ENCODE measurements at regions of chr10 and their contacts with region 1.

Region 1: DNA sequence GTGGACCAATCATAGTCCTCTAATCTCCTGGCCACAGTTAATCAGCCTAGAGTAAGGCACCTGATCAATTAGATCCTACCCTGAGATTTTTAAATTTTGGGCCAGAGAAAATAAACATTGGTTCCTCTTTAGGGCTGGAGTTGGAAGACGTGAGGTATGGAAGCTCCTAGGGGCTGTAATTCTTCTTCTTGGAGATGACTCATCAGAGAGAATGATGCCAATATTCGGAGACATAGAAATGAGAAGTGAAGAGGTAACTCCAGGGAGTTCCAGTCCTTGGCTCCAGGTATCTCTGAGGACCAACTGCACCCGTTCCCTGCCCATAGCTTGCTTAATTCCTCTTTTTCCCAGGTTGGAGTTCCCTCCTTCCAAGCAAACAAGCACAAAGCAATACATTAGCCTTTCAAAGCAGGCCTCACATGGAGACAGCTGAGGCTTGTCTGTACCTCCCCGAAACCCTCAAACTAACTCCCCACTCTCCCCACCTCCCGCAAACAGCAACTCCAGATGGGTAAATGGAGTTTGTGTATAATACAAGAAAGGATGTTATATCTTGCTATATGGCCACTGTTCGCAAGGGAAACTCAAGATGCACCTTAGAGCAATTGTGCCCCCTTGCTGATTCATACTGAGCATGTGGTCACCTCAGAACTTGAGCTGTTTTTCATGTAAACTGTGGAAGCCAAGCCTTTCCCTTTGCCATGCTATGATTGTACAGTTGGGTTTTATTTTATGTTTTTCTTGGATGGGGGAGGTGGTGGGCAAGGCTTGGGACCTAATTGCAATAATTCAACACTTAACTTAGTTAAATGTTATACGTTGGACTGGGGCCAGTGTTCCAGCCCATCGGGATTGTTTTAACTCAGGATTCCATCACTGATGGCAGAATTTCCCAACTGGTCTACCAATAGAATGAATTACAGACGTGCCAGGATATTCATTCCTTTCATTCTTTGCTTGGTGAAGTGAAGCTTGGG is 29.3 kb downstream of the PIK3AP1 start:
- DNase-seq: no peak
- ATAC-seq: peak; percentile 35
- H3K4me3 Mint-ChIP-seq: peak overlapping the region; percentile 62
- H3K27ac Mint-ChIP-seq: peak overlapping the region; percentile 82
- H3K4me1 Mint-ChIP-seq: peaks cover 94% of the 10 kb centered on the region
- H3K27me3 Mint-ChIP-seq: no peaks in the 10 kb centered on the region
- CTCF ChIP-seq: no peak

Region 2: DNA sequence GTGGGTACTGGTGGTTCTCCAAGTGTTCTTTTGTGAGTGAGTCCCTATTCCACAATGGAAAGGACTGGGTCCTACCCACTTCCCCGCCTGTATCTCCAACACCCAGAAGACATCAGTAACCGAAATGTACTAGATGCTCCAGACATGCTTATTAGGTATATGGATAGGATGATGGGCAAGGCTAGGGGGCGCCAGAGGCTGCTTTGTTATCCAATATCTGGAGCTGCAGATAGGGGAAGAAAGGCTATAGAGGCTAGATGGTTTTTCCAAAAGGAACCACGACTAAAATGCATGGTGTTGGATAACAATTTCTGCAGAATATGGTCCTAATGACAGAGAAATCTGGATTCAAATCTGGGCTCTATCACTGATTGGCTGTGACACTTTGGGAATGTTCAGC is 48.1 kb before region 1 on chr10:
- CTCF ChIA-PET with region 1: interaction called, 6 read pairs
- POLR2A ChIA-PET with region 1: interaction called, 8 read pairs
- intact Hi-C with region 1: loop called (anchors 1 kb)
- DNase-seq: peak; percentile 54
- ATAC-seq: no peak
- H3K4me3 Mint-ChIP-seq: no peak overlapping the region
- H3K27ac Mint-ChIP-seq: peak overlapping the region; percentile 56
- H3K4me1 Mint-ChIP-seq: peaks cover 58% of the 10 kb centered on the region
- H3K27me3 Mint-ChIP-seq: no peaks in the 10 kb centered on the region
- CTCF ChIP-seq: no peak

Region 3: GRCh38 chr10:96673318-96674099 is 17.5 kb before region 1 on chr10:
- CTCF ChIA-PET with region 1: interaction called, 4 read pairs
- POLR2A ChIA-PET with region 1: interaction called, 11 read pairs
- intact Hi-C with region 1: loop called (anchors 1 kb)
- DNase-seq: peak; percentile 39
- ATAC-seq: peak; percentile 83
- H3K4me3 Mint-ChIP-seq: peak overlapping the region; percentile 77
- H3K27ac Mint-ChIP-seq: peak overlapping the region; percentile 99
- H3K4me1 Mint-ChIP-seq: peaks cover 90% of the 10 kb centered on the region
- H3K27me3 Mint-ChIP-seq: no peaks in the 10 kb centered on the region
- CTCF ChIP-seq: no peak

Region 4: DNA sequence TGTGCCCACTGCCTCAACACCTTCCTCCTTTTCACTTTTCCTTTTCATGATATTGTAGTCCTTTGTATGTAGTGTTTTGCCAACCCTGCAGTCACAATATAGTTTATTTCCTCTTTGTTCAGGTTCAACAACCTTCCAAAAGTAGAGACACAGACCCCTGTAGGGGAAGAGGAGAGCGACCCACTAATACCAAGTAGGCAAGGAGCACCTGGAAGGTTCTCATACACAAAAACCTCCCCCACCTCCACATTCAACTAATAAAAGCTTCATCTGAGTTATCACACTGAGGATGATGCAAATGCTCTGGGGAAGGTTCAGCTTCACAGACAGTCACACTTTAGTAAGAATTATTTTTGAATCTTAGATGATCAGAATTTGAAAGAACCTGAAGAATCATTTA is 12.3 kb before region 1 on chr10:
- CTCF ChIA-PET with region 1: interaction called, 3 read pairs
- POLR2A ChIA-PET with region 1: interaction called, 11 read pairs
- intact Hi-C with region 1: loop called (anchors 1 kb)
- DNase-seq: no peak
- ATAC-seq: peak; percentile 42
- H3K4me3 Mint-ChIP-seq: peak overlapping the region; percentile 57
- H3K27ac Mint-ChIP-seq: peak overlapping the region; percentile 86
- H3K4me1 Mint-ChIP-seq: peaks cover 90% of the 10 kb centered on the region
- H3K27me3 Mint-ChIP-seq: no peaks in the 10 kb centered on the region
- CTCF ChIP-seq: no peak

Region 5: GRCh38 chr10:96708456-96708855 is 17.4 kb after region 1 on chr10:
- CTCF ChIA-PET with region 1: interaction called, 3 read pairs
- POLR2A ChIA-PET with region 1: interaction called, 11 read pairs
- intact Hi-C with region 1: no loop called
- DNase-seq: no peak
- ATAC-seq: peak; percentile 77
- H3K4me3 Mint-ChIP-seq: peak overlapping the region; percentile 69
- H3K27ac Mint-ChIP-seq: peak overlapping the region; percentile 96
- H3K4me1 Mint-ChIP-seq: peaks cover 83% of the 10 kb centered on the region
- H3K27me3 Mint-ChIP-seq: no peaks in the 10 kb centered on the region
- CTCF ChIP-seq: no peak

Region 6: GRCh38 chr10:97898429-97898828 is 1207.4 kb after region 1 on chr10:
- CTCF ChIA-PET with region 1: no interaction called
- POLR2A ChIA-PET with region 1: no interaction called
- intact Hi-C with region 1: no loop called
- DNase-seq: no peak
- ATAC-seq: no peak
- H3K4me3 Mint-ChIP-seq: no peak overlapping the region
- H3K27ac Mint-ChIP-seq: no peak overlapping the region
- H3K4me1 Mint-ChIP-seq: no peaks in the 10 kb centered on the region
- H3K27me3 Mint-ChIP-seq: peaks cover 14% of the 10 kb centered on the region
- CTCF ChIP-seq: no peak

Region 7: GRCh38 chr10:98125940-98126631 is 1435.0 kb after region 1 on chr10:
- CTCF ChIA-PET with region 1: no interaction called
- POLR2A ChIA-PET with region 1: no interaction called
- intact Hi-C with region 1: no loop called
- DNase-seq: no peak
- ATAC-seq: no peak
- H3K4me3 Mint-ChIP-seq: no peak overlapping the region
- H3K27ac Mint-ChIP-seq: no peak overlapping the region
- H3K4me1 Mint-ChIP-seq: no peaks in the 10 kb centered on the region
- H3K27me3 Mint-ChIP-seq: peaks cover 15% of the 10 kb centered on the region
- CTCF ChIP-seq: no peak